Naive thymus-derived CD4-positive, alpha-beta T cell (primary cell): ENCODE measurements at regions of chr5 and their contacts with region 1.

Region 1: DNA sequence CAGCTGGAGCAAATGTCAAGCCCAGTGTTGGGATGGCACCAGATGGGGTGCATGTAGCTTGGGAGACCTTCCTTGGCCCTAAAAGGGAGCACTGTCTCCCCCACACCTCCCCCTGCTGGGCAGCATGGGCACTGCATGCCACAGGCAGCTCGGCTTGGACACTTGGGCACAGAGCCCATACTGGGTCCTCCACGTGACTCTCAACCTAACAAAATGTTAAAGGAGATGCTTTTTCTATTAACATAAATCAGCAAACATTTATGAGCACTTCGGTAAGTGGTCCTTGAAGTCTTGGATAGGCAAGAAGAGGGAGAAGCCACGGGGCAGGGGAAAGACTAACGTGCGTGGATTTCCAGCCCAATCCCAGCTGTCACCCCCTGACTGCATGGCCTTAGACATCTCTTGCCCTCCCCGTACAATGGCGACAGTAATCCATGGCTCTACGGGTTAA is 23.9 kb upstream of the MAPK9 start:
- DNase-seq: peak; percentile 52 to 79 (median 66)
- ATAC-seq: peak; percentile 96
- H3K4me3 ChIP-seq: no peak overlapping the region
- H3K4me3 Mint-ChIP-seq: peak overlapping the region in 1 of 10 donors; percentile 30
- H3K27ac ChIP-seq: no peak overlapping the region
- H3K27ac Mint-ChIP-seq: no peak overlapping the region
- H3K4me1 ChIP-seq: no peaks in the 10 kb centered on the region
- H3K4me1 Mint-ChIP-seq: peaks cover 0 to 8% (median 0%) of the 10 kb centered on the region in 7 donors
- H3K27me3 ChIP-seq: no peaks in the 10 kb centered on the region
- H3K27me3 Mint-ChIP-seq: no peaks in the 10 kb centered on the region

Region 2: DNA sequence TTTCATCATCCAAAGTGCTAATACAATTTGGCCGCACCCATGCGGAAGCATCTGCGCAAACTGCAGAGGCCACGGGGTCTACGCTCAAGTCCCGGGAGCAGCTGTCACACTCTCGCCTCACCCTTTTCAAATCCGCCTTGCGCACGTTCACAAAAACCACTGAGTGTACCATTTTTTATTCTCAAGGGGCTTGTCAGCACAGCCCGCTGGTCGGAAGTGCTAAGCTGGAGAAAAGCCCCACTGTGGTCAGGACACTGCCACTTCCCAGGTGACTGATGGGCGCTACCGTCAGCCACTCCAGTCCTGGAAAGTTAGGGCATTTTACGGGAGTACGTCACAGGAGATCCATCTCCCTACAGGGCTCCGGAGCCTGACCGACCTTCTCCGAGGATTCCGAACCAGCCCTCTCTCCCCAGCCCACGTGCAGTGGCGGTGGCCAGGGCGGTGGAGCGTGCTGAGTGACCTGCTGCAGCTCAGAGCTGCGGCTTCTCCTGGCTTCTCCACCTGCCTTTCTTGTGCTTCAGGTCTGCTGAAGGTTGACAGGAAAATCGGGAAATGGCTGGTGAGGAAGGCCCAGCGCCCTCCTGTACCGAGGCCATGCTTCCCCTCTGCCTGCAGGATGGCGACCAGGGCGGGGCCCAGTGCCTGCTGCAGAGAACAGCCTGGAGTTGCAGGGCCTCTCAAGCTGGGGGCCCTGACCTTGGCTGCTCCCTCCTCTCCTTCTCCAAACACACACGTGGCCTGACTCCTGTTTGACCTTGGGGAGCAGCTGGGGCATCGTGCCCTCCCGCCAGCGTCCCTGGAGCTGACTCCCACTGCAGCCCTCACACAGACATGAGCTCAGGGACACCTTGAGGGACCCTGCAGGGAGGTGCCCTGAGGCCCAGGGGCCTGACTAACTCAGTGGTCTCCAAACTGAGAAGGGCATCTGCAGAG is 121.1 kb before region 1 on chr5:
- CTCF ChIA-PET with region 1: no interaction called
- POLR2A ChIA-PET with region 1: no interaction called
- intact Hi-C with region 1: loop called in 1 of 2 experiments (anchors 5 kb)
- DNase-seq: no peak
- ATAC-seq: no peak
- H3K4me3 ChIP-seq: no peak overlapping the region
- H3K4me3 Mint-ChIP-seq: no peak overlapping the region
- H3K27ac ChIP-seq: no peak overlapping the region
- H3K27ac Mint-ChIP-seq: no peak overlapping the region
- H3K4me1 ChIP-seq: no peaks in the 10 kb centered on the region
- H3K4me1 Mint-ChIP-seq: no peaks in the 10 kb centered on the region
- H3K27me3 ChIP-seq: no peaks in the 10 kb centered on the region
- H3K27me3 Mint-ChIP-seq: peaks cover 0 to 22% (median 0%) of the 10 kb centered on the region in 5 donors

Region 3: DNA sequence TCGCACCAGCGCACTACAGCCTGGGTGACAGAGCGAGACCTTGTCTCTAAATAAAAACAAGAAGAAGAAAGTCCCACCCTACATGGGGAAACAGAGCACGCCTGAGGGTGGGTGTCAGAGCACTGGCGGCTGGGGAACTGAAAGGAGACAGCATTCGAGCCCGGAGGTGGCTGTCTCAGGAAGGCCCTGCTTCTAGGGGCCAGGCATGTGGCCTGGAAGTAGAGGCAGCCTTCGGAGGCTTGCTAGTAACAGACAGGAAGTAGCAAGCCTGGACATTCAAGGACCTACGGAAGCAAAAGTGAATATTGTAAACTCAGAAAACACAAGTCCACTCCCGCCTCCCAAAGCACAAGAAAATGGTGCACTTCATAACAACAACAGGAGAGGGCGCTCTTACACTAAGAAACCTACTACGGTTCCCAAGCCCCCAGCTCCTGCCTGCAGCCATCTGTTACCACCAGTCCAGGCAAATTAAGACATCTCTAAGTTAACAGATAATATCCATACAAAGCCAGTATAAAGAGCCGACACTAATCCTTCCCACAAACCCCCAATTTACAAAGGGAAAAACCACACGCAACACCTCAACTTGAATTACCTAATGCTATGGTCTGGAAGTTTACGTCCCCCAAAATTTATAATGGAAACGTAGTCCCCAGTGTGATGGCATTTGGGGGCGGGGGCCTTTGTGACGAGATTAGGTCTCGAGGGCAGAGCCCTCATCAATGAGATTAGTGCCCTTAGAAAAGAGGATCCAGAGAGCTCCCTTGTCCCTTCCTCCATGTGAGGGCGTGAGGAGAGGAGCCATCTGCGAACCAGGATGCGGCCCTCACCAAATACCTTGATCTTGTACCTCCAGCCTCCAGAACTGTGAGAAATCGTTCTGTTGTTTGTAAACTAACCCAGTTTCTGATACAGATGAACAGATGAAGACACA is 114.5 kb before region 1 on chr5:
- CTCF ChIA-PET with region 1: interaction called, 6 read pairs
- POLR2A ChIA-PET with region 1: no interaction called
- intact Hi-C with region 1: loop called (anchors 2 to 5 kb)
- DNase-seq: no peak
- ATAC-seq: no peak
- H3K4me3 ChIP-seq: no peak overlapping the region
- H3K4me3 Mint-ChIP-seq: no peak overlapping the region
- H3K27ac ChIP-seq: no peak overlapping the region
- H3K27ac Mint-ChIP-seq: no peak overlapping the region
- H3K4me1 ChIP-seq: no peaks in the 10 kb centered on the region
- H3K4me1 Mint-ChIP-seq: no peaks in the 10 kb centered on the region
- H3K27me3 ChIP-seq: no peaks in the 10 kb centered on the region
- H3K27me3 Mint-ChIP-seq: peaks cover 4 to 44% (median 24%) of the 10 kb centered on the region in 5 donors

Region 4: GRCh38 chr5:180328296-180329137 is 12.7 kb after region 1 on chr5:
- CTCF ChIA-PET with region 1: interaction called, 20 read pairs
- POLR2A ChIA-PET with region 1: interaction called, 3 read pairs
- intact Hi-C with region 1: no loop called
- DNase-seq: peak; percentile 60 to 79 (median 75)
- ATAC-seq: peak; percentile 91
- H3K4me3 ChIP-seq: no peak overlapping the region
- H3K4me3 Mint-ChIP-seq: no peak overlapping the region
- H3K27ac ChIP-seq: no peak overlapping the region
- H3K27ac Mint-ChIP-seq: no peak overlapping the region
- H3K4me1 ChIP-seq: no peaks in the 10 kb centered on the region
- H3K4me1 Mint-ChIP-seq: peaks cover 0 to 3% (median 0%) of the 10 kb centered on the region in 7 donors
- H3K27me3 ChIP-seq: no peaks in the 10 kb centered on the region
- H3K27me3 Mint-ChIP-seq: peaks cover 4 to 19% (median 9%) of the 10 kb centered on the region in 5 donors

Region 5: DNA sequence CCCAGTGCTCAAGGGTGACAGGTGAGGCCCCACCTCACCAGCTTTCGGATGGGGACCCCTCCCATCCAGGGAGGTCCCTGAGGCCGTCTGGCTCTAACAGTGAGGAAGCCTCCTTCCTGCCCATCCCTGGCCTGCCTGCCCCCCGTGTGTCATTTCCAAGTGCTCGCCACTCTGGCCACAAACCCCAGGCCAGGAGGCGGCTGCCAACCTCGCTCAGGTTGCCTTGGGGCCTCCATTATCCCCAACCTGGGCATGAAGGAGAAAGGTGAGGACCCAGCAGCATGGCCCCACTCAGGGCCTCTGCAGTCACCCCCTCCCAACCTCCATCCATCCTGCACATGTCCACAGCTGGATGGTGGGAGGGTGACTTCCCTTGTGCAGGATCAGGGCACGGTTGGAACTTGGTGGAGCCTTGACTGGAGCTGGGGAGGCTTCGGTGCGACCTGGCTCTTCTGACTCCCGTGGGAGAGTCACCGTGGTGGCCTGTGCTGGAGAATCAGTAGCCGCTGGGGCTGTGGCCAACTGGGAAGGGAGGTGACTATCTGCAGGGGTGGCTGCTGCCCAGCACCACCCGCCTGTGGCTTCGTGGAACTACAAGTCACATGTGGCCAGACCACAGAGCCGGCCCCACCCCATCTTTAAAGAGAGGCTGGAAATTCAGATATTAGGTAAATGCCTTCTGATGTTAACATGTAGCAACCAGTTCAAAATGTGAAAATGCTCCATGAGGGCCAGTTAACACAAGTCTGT is 74.8 kb after region 1 on chr5:
- CTCF ChIA-PET with region 1: no interaction called
- POLR2A ChIA-PET with region 1: no interaction called
- intact Hi-C with region 1: no loop called
- DNase-seq: no peak
- ATAC-seq: no peak
- H3K4me3 ChIP-seq: no peak overlapping the region
- H3K4me3 Mint-ChIP-seq: no peak overlapping the region
- H3K27ac ChIP-seq: no peak overlapping the region
- H3K27ac Mint-ChIP-seq: no peak overlapping the region
- H3K4me1 ChIP-seq: no peaks in the 10 kb centered on the region
- H3K4me1 Mint-ChIP-seq: peaks cover 0 to 3% (median 0%) of the 10 kb centered on the region in 7 donors
- H3K27me3 ChIP-seq: no peaks in the 10 kb centered on the region
- H3K27me3 Mint-ChIP-seq: peaks cover 0 to 11% (median 3%) of the 10 kb centered on the region in 5 donors